Spleen (tissue), 13 donors: ENCODE measurements at regions of chr14 and their contacts with region 1.

Region 1: GRCh38 chr14:95527387-95528002 is 7.4 kb upstream of the GLRX5 start:
- DNase-seq: no peak
- H3K4me3 ChIP-seq: no peak overlapping the region
- H3K27ac ChIP-seq: peak overlapping the region in 3 of 8 donors; percentile 21 to 59 (median 36)
- H3K4me1 ChIP-seq: peaks cover 23 to 75% (median 58%) of the 10 kb centered on the region in 6 donors
- H3K27me3 ChIP-seq: no peaks in the 10 kb centered on the region
- CTCF ChIP-seq: peak; percentile 64 to 86 (median 82)
- POLR2A ChIP-seq: no peak

Region 2: GRCh38 chr14:95425369-95426115 is 102.0 kb before region 1 on chr14:
- intact Hi-C with region 1: loop called (anchors 5 kb)
- DNase-seq: no peak
- H3K4me3 ChIP-seq: no peak overlapping the region
- H3K27ac ChIP-seq: no peak overlapping the region
- H3K4me1 ChIP-seq: peaks cover 0 to 4% (median 0%) of the 10 kb centered on the region in 6 donors
- H3K27me3 ChIP-seq: no peaks in the 10 kb centered on the region
- CTCF ChIP-seq: no peak
- POLR2A ChIP-seq: no peak

Region 3: GRCh38 chr14:95442633-95443021 is 84.9 kb before region 1 on chr14:
- intact Hi-C with region 1: loop called (anchors 5 kb)
- DNase-seq: peak; percentile 93
- H3K4me3 ChIP-seq: no peak overlapping the region
- H3K27ac ChIP-seq: peak overlapping the region in 2 of 8 donors; percentile 5 to 30
- H3K4me1 ChIP-seq: peaks cover 0 to 25% (median 12%) of the 10 kb centered on the region in 6 donors
- H3K27me3 ChIP-seq: no peaks in the 10 kb centered on the region
- CTCF ChIP-seq: peak; percentile 55 to 92 (median 78)
- POLR2A ChIP-seq: no peak